ENCODE measurements at regions of chr9 and their contacts with region 1.

Region 1: DNA sequence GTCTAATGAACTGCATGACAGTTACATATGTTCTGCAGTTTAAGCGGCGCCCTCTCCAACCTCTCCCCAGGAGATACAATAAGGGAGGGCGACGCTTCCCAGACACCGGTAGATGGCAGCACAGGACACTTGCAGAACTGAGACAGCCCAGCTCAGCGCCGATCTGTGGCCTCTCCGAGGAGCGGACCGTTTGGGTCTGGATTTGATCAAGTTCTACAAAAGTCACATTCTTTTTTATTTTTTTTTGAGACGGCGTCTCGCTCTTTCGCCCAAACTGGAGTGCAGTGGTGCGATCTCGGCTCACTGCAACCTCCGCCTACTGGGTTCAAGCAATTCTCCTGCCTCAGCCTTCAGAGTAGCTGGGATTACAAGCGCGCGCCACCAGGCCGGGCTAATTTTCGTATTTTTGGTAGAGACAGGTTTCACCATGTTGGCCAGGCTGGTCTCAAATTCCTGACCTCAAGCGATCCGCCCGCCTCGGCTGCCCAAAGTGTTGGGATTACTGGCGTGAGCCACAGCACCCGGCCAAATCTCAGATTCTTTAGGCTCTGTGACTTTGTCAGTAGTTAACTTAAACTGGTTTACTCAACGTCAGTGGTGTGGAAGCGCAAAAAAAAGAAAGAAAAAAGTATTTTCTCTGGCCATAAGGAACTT is 1.4 kb upstream of the ATOSB start:
- DNase-seq: peak; percentile 95 to 98 (median 96)
- H3K4me3 ChIP-seq: peak overlapping the region in 6 of 7 experiments; percentile 75 to 97 (median 83)
- H3K27ac ChIP-seq: no peak overlapping the region
- H3K4me1 ChIP-seq: peaks cover 11 to 43% (median 41%) of the 10 kb centered on the region in 4 experiments
- H3K27me3 ChIP-seq: no peaks in the 10 kb centered on the region

Region 2: DNA sequence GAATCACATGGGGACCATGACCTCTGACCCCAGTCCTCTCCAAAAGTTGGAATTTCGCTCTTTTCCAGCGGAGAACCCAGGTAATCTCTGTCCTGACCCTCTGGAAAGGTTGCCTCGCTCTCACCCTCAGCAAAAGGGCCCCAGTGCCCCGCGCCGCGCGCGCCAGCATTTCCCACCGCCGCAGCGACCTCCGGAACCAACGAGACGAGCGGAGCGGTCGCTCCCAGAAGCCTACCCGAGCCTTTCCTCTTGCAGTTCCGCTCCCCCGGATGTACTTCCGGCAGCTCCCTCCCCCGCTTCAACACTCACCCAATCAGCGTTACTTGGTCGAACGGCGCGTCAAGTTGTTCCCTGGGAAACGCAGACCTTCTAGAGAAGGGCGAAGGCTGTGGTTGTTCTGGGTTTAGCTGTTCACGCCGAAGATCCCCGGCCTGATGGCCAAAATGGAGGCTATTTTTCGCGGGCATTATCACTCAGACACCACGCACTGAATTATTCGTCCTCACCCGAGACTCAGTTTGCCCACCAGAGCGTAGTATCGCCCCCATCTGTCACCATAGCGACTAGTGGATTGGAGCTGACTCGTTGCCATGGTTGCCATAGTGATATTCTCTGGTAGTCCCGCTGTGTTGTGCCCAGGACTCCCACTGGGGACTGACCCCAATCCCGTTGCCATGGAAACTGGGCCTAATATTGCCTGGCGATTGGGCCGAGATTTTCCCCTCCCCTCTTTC is 13.9 kb before region 1 on chr9 and contains the start of gene STOML2:
- CTCF ChIA-PET with region 1: interaction called, 48 read pairs
- POLR2A ChIA-PET with region 1: interaction called, 6 read pairs
- DNase-seq: peak; percentile 97 to 98 (median 98)
- H3K4me3 ChIP-seq: peak within 1 kb of the TSS; percentile 67 to 95 (median 85)
- H3K27ac ChIP-seq: peak within 1 kb of the TSS; percentile 89 to 91
- H3K4me1 ChIP-seq: peaks cover 8 to 42% (median 29%) of the 10 kb centered on the region in 4 experiments
- H3K27me3 ChIP-seq: no peaks in the 10 kb centered on the region

Region 3: DNA sequence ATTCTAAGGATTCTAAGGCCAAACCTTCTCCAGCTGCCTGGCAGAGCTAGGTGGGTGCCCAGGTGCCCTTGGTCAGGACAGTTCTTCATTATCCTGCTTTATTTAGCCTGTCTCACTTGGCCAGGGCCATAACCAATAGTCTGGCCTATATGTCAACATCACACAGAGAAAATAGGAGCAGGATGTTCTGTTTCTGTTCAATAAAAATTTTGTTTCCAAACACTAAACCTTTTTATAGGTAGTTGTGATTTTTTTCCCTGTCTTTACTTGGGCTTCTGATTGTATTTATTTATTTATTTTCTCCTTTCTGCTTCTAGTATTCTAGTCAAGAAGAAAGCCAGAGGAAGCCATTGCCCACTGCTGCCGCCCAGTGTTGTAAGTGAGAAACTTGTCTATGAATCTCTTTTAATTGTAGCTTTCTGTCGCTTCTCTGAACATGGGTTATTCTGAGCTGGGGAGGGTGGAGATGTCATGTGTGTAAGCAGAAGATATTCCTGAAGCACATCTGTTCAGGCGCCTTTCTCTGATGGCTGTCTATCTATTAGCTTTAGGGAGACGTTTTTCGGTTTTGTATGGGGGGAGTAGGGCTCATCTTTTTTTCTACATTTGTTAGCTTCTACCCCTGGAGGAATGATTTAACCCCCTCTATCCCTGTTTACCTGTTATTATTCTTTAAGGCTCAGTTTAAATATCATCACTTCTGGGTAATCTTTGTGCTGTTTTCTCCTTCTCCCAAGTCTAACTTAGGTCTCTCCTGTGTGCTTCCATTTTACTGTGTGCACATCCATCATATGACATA is 141.8 kb after region 1 on chr9:
- CTCF ChIA-PET with region 1: interaction called, 36 read pairs
- POLR2A ChIA-PET with region 1: interaction called, 3 read pairs
- DNase-seq: peak; percentile 65 to 76 (median 71)
- H3K4me3 ChIP-seq: no peak overlapping the region
- H3K27ac ChIP-seq: no peak overlapping the region
- H3K4me1 ChIP-seq: no peaks in the 10 kb centered on the region
- H3K27me3 ChIP-seq: no peaks in the 10 kb centered on the region

Region 4: GRCh38 chr9:35481347-35481975 is 364.4 kb after region 1 on chr9:
- CTCF ChIA-PET with region 1: interaction called, 41 read pairs
- POLR2A ChIA-PET with region 1: no interaction called
- DNase-seq: peak; percentile 62 to 84 (median 80)
- H3K4me3 ChIP-seq: no peak overlapping the region
- H3K27ac ChIP-seq: no peak overlapping the region
- H3K4me1 ChIP-seq: peaks cover 0 to 2% (median 0%) of the 10 kb centered on the region in 4 experiments
- H3K27me3 ChIP-seq: no peaks in the 10 kb centered on the region